ENCODE measurements at regions of chr7 and their contacts with region 1.

Region 1: DNA sequence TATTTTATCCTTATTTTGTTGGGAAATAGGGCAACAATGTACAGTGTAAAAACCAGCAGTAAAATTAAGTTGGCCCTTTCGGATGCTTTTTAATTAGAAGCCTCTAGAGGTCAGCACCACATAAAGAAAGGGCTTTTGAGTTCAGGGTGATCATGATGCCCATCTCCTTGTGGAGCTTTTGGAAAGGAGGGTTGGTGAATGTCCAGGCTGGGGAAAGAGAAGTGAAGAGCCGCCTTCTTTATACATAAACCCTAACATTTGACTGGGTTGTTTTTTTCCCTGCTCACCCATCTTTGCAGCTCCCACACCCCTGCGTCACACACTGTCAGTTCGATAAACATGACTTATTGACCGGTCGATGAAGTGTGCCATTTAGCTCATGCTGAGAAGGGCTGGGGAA is 29.8 kb downstream of the MTURN start:
- DNase-seq: no peak
- ATAC-seq: peak; percentile 59 to 79 (median 76)
- H3K4me3 ChIP-seq: no peak overlapping the region
- H3K27ac ChIP-seq: no peak overlapping the region
- H3K4me1 ChIP-seq: peaks cover 6 to 18% (median 10%) of the 10 kb centered on the region in 3 donors
- H3K27me3 ChIP-seq: no peaks in the 10 kb centered on the region
- CTCF ChIP-seq: peak in 3 of 4 donors; percentile 24 to 37 (median 32)

Region 2: DNA sequence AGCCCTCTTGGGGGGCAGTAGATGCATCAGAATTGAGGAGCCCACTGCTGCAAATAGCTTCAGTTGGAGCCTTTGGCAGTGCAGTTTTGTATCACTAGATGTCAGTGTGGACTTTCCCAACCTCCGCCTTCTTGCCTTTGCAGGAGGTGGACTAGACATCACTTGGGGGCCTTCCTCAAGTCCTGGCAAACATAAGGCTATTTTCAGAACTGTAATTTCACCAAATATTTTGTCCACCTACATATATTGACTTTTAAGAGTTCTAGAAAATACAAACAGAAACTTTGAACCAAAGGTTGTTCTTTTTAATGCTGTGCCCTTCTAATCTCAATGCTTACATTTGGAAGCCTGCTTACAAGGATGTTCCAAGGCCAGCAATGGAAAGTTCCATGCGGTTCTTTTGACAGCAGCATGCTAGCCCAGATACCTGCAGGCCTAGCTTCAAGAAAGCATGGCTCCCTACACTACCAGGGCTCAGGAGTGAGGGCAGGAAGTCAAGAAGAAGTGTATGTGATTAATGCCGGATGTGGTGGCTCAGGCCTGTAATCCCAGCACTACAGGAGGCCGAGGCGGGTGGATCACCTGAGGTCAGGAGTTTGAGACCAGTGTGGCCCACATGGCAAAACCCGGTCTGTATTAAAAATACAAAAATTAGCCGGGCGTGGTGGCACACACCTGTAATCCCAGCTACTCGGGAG is 111.8 kb after region 1 on chr7:
- intact Hi-C with region 1: loop called in 1 of 3 experiments (anchors 10 kb)
- DNase-seq: peak in 1 of 6 donors; percentile 40
- ATAC-seq: peak; percentile 53 to 84 (median 83)
- H3K4me3 ChIP-seq: no peak overlapping the region
- H3K27ac ChIP-seq: no peak overlapping the region
- H3K4me1 ChIP-seq: peaks cover 0 to 4% (median 0%) of the 10 kb centered on the region in 3 donors
- H3K27me3 ChIP-seq: no peaks in the 10 kb centered on the region
- CTCF ChIP-seq: peak in 3 of 4 donors; percentile 21 to 40 (median 29)

Region 3: GRCh38 chr7:30406664-30407425 is 242.3 kb after region 1 on chr7:
- intact Hi-C with region 1: loop called in 2 of 3 experiments (anchors 5 to 10 kb)
- DNase-seq: no peak
- ATAC-seq: peak in 1 of 4 donors; percentile 23
- H3K4me3 ChIP-seq: no peak overlapping the region
- H3K27ac ChIP-seq: no peak overlapping the region
- H3K4me1 ChIP-seq: no peaks in the 10 kb centered on the region
- H3K27me3 ChIP-seq: no peaks in the 10 kb centered on the region
- CTCF ChIP-seq: no peak

Region 4: DNA sequence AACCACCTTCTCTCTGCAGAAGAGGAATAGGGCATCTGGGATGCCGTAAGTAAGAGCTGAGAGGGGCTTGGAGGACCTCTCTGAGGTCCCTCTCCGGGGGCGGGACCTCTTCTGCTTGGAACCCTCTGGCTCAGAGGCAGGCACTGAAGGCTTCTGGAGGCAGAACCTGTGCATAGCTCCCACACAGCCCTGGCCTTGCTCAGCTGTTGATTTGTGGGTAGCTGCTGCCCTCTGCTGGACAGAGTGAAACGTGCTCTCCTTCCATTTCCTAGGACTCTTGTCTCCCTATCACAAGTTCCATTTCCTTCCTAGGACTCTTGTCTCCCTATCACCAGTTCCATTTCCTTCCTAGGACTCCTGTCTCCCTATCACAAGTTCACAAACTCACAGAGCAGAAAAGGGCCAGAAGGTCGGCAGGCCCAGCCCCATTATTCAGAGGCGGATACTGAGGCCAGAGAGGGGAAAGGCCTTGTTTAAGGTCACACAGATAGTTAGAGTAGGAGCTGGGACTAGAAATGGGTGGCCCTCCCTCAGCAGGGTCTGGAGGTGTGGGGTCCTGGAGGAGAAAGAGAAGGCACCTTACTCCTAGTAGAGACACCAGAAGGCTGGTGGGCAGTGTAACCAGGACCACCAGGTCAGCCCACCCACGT is 399.8 kb after region 1 on chr7:
- intact Hi-C with region 1: loop called in 1 of 3 experiments (anchors 10 kb)
- DNase-seq: peak; percentile 67 to 90 (median 83)
- ATAC-seq: peak; percentile 95 to 99 (median 98)
- H3K4me3 ChIP-seq: no peak overlapping the region
- H3K27ac ChIP-seq: no peak overlapping the region
- H3K4me1 ChIP-seq: no peaks in the 10 kb centered on the region
- H3K27me3 ChIP-seq: no peaks in the 10 kb centered on the region
- CTCF ChIP-seq: peak; percentile 57 to 80 (median 66)

Measured in pancreas (tissue), 10 donors.